ENCODE measurements at regions of chrX and their contacts with region 1.

Region 1: GRCh38 chrX:149470955-149471354 is 34.2 kb downstream of the IDS start:
- DNase-seq: peak; percentile 49
- H3K4me3 ChIP-seq: no peak overlapping the region
- H3K27ac ChIP-seq: no peak overlapping the region
- H3K4me1 ChIP-seq: no peaks in the 10 kb centered on the region
- H3K27me3 ChIP-seq: no peaks in the 10 kb centered on the region
- CTCF ChIP-seq: peak; percentile 41 to 86 (median 71)
- POLR2A ChIP-seq: no peak

Region 2: GRCh38 chrX:148049441-148049840 is 1421.5 kb before region 1 on chrX:
- intact Hi-C with region 1: loop called (anchors 10 kb)
- DNase-seq: no peak
- H3K4me3 ChIP-seq: no peak overlapping the region
- H3K27ac ChIP-seq: no peak overlapping the region
- H3K4me1 ChIP-seq: no peaks in the 10 kb centered on the region
- H3K27me3 ChIP-seq: no peaks in the 10 kb centered on the region
- CTCF ChIP-seq: peak in 3 of 4 experiments; percentile 18 to 45 (median 26)
- POLR2A ChIP-seq: no peak

Region 3: DNA sequence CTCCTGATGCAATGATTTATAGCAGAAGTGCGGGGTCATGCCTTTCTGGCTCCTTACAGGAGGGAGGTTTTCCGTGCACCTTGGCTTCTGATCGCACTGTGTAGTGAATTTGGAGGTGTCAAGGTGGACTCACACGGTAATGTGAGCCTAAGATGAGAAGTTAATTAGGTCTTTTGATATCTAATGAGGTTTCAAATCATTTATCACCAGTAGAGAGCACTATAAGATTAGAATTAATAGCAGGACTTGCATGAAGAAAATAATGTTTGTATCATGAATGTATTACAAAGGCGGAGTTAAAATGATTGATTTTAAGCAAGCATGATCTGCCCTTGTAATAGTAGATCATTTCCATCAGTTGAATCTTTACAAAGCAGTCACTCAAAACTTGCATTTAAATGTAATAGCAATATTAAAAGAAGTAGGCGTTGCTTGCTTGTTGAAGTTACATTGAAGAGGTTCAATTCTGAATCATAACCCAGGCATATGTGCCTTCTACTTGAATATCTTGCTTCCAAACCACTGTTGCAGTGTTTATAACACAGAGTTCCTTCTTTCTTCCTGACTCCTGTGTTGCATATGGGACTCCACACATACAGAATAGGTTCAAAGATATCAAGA is 1337.7 kb before region 1 on chrX:
- intact Hi-C with region 1: loop called (anchors 5 kb)
- DNase-seq: no peak
- H3K4me3 ChIP-seq: no peak overlapping the region
- H3K27ac ChIP-seq: no peak overlapping the region
- H3K4me1 ChIP-seq: no peaks in the 10 kb centered on the region
- H3K27me3 ChIP-seq: no peaks in the 10 kb centered on the region
- CTCF ChIP-seq: peak in 1 of 4 experiments; percentile 5
- POLR2A ChIP-seq: no peak

Region 4: DNA sequence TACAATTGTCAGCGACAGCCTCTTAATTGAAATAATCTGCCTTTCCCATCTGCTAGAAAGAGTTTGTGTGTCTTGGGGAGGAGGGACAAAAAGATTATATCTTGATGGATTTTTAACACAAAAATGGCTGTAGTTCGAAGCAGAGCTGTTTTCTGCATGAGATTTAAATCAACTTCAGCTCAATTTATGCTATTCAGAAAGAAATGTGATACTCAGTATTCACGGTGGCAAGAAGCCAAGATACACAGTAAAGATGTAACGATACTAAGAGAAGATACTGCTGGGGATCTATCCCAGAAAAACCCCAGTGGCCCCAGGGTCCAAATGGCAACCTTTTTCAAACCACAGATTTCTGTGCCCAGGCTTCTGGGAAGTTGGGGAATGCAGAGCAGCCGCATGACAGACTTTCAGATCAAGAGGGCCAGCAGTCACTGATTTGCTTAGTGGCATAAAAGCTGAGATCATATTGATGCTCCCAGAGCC is 616.7 kb before region 1 on chrX:
- intact Hi-C with region 1: no loop called
- DNase-seq: no peak
- H3K4me3 ChIP-seq: no peak overlapping the region
- H3K27ac ChIP-seq: no peak overlapping the region
- H3K4me1 ChIP-seq: no peaks in the 10 kb centered on the region
- H3K27me3 ChIP-seq: no peaks in the 10 kb centered on the region
- CTCF ChIP-seq: no peak
- POLR2A ChIP-seq: no peak

Measured in prostate gland (tissue), 2 donors.